ENCODE measurements at regions of chr9 and their contacts with region 1.

Region 1: GRCh38 chr9:132404228-132404881 is 2.3 kb downstream of the TTF1 start:
- DNase-seq: peak; percentile 55
- CTCF ChIP-seq: no peak

Region 2: GRCh38 chr9:132390966-132391365 is 13.4 kb before region 1 on chr9:
- CTCF ChIA-PET with region 1: interaction called, 10 read pairs
- POLR2A ChIA-PET with region 1: no interaction called
- DNase-seq: no peak
- CTCF ChIP-seq: no peak

Region 3: DNA sequence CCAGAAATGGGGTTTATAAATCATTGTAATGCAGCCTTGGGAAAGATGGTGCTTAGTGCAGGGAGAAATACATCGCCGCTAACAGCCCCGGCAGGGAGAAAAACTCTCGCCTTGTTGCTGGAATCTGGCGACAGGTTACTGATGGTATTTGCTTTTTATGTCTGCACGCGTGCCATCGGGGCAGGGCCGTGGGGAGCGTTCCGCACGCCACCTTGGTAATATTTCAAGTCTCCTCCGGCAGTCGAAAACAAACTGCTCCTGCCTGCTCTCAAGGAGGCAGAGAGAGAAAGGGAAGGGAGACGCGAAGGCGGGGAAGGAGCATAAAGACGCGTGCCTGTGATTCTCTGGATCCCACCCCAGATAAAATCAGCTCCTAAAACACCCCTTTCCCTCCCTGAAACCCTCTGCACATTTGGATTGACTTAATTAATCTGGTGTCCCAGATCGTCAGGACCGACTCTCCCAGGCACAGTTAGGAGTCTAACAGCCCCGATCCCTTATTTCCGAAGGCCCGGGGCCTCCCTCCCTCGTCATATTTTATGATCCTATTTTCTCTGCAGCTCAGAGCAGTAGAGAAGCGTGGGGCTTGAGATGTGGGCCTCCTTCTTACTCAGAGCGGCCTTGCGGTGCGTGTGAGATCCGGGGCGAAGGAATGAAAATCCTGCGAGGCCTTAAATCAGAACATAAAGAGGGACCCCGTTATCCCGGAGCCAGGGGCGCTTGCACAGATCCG is 53.3 kb after region 1 on chr9:
- CTCF ChIA-PET with region 1: no interaction called
- POLR2A ChIA-PET with region 1: no interaction called
- DNase-seq: no peak
- CTCF ChIP-seq: no peak

Region 4: DNA sequence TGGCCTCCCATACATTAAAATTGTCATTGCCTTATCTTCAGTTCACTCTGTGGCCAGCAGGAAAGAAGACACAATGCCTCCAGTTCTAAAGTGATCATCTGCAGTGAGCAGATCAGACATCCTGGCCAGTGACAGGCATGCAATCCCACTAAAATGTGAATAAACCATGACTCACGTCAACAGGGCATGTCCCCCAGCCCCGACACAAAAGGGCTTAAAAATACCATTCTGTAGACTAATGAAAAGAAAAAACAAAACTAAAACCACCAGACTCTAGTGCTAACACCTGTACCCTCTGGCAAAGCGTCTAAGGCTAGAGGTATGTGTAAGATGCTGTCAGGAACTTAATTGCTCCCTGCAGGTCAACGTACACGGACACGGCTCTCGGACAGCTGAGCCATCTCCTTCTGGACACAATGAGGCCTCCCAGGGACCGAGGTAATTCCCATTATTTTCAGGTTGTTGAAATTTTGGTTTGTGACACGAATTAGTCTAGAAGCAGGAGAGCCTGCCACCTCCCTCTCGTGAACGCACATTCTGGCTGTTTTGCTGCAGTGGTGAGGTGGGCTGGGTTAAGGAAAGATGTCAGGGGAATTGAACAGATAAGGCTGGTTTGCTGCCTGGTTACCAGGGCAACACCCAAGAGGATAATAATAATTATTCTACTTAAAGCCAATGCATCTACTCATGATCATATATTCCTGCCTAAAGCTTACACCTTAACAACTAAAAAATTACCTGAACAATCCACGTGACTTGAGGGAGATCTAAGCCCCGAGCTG is 227.1 kb after region 1 on chr9:
- CTCF ChIA-PET with region 1: no interaction called
- POLR2A ChIA-PET with region 1: no interaction called
- DNase-seq: no peak
- CTCF ChIP-seq: no peak

Measured in GM10248 (cell line).